AG04449 (cell line): ENCODE measurements at regions of chr13 and their contacts with region 1.

Region 1: DNA sequence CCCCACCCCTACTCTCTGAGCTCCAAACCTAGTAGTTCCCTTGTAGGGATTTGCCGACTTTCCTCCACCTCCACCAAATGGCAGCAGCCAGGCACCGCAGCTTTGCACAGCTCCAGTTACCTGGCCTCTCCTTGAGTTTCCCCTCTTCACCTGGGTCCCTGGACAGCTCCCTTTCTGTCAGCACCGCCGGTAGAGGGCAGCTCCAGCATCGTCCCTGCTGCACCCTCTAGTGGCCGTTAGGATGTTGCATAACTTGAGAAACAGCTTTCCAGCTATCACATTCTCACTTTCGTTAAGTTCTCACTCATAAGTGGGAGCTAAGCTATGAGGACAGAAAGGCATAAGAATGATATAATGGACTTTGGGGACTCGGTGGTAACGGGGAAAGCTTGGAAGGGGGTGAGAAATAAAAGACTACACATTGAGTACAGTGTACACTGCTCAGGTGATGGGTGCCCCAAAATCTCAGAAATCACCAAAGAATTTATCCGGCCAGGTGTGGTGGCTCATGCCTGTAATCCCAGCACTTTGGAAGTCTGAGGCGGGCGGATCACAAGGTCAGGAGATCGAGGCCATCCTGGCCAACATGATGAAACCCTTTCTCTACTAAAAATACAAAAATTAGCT is 60.4 kb upstream of the OLFM4 start:
- DNase-seq: peak; percentile 4
- H3K4me3 ChIP-seq: no peak overlapping the region
- CTCF ChIP-seq: peak; percentile 99

Region 2: GRCh38 chr13:52868190-52868589 is 100.0 kb before region 1 on chr13:
- CTCF ChIA-PET with region 1: no interaction called
- POLR2A ChIA-PET with region 1: no interaction called
- DNase-seq: no peak
- H3K4me3 ChIP-seq: no peak overlapping the region
- CTCF ChIP-seq: no peak

Region 3: GRCh38 chr13:52980695-52981094 is 12.5 kb after region 1 on chr13:
- CTCF ChIA-PET with region 1: interaction called, 19 read pairs
- POLR2A ChIA-PET with region 1: no interaction called
- DNase-seq: no peak
- H3K4me3 ChIP-seq: no peak overlapping the region
- CTCF ChIP-seq: no peak

Region 4: GRCh38 chr13:53144826-53145225 is 176.6 kb after region 1 on chr13:
- CTCF ChIA-PET with region 1: interaction called, 12 read pairs
- POLR2A ChIA-PET with region 1: no interaction called
- DNase-seq: no peak
- H3K4me3 ChIP-seq: no peak overlapping the region
- CTCF ChIP-seq: no peak

Region 5: GRCh38 chr13:53151336-53152056 is 183.3 kb after region 1 on chr13:
- CTCF ChIA-PET with region 1: interaction called, 21 read pairs
- POLR2A ChIA-PET with region 1: no interaction called
- DNase-seq: no peak
- H3K4me3 ChIP-seq: no peak overlapping the region
- CTCF ChIP-seq: peak; percentile 67